ENCODE measurements at regions of chr6 and their contacts with region 1.

Region 1: DNA sequence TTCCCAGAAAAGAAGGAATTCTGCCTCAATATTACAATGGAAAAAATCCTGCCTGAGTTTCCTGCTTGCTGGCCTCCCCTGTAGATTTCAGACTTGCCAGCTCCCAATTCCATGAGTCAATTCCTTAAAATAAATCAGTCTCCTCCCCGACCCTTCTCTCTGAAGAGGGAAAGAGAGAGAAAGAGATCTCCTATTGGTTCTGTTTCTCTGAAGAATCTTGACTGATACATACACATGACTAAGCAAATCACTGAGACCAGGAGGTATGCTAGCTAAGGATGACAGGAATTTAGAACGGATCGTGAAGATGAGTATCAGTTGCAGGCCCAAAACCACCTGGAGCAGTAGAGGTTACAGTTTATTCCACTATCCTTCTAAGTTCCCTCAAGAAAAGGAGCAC is 11.3 kb upstream of the RBM24 start:
- DNase-seq: no peak
- ATAC-seq: peak; percentile 59

Region 2: GRCh38 chr6:17200395-17200794 is 69.4 kb before region 1 on chr6:
- intact Hi-C with region 1: loop called (anchors 10 kb)
- DNase-seq: no peak
- ATAC-seq: no peak

Region 3: DNA sequence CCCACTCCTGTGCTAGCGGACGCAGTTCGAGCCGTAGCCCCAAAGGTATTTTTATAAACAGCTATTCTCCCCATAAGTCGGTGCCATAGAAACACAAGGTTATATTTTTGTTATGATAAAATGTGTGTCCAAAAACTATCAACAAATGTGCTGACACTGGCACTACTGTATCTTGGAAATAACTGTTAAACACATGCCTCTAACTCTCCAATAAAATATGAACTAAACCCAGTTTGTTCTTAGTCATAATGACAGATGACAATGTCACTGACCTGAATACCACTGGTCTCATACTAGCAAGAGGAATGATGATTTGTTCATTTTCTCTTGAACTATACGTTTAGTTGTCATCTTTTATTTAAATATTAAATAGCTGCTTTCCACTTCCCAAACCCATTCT is 488.3 kb after region 1 on chr6:
- intact Hi-C with region 1: no loop called
- DNase-seq: no peak
- ATAC-seq: no peak

Measured in Right ventricle myocardium superior (tissue), 1 donor.